ENCODE measurements at regions of chr1 and their contacts with region 1.

Region 1: DNA sequence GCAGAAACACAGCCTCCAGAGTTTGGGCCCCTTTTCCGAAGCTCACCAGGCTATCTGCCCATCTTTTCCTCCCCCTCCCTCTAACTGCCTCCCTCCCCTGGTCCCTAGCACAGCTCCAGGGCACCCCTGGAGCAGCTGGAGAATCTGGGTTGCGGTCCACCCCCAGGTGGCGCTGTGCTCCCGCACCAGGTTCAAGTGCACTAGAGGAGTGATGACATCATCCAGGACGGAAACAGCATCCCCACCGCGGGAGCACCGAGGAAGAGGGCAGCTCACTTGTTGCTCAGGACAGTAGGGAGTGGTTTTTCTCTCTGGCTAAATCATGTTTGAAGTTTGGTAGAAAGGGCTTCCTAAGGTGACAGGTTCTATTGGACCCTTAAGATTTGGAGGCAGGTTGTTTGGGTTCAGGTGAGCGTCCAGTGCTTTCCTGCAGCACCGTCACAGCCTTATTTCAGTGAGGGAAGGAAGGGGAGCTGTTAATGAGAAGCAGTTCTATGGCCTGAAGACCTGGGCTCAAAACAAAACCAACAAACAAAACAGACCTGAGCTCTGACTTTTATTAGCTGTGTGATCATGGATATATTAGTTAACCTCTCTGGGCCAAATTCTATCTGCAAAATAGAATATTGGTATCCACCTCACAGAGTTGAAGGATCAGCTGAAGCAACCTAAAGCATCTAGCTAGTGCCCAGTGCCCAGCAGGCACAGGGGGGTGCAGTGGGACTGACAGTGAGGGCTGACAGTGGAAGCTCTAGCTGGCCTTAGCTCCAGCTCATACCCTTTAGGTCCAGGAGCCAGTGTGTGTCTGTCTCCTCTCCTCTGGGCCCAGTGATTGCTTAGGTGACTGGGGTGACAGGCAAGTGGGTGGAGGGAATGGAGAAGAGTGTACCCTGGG is 7.5 kb downstream of the SHISA4 start:
- DNase-seq: peak; percentile 81
- H3K4me3 ChIP-seq: no peak overlapping the region
- H3K27ac ChIP-seq: peak overlapping the region; percentile 54 to 59
- H3K4me1 ChIP-seq: no peaks in the 10 kb centered on the region
- H3K27me3 ChIP-seq: no peaks in the 10 kb centered on the region
- CTCF ChIP-seq: peak; percentile 74 to 96 (median 92)
- POLR2A ChIP-seq: no peak

Region 2: GRCh38 chr1:201946224-201946908 is 50.2 kb after region 1 on chr1 and contains the start of gene LMOD1:
- intact Hi-C with region 1: loop called (anchors 2 kb)
- DNase-seq: peak; percentile 66
- H3K4me3 ChIP-seq: peak within 1 kb of the TSS; percentile 32 to 40
- H3K27ac ChIP-seq: peak within 1 kb of the TSS; percentile 74 to 81
- H3K4me1 ChIP-seq: no peaks in the 10 kb centered on the region
- H3K27me3 ChIP-seq: no peaks in the 10 kb centered on the region
- CTCF ChIP-seq: peak in 1 of 4 experiments; percentile 18
- POLR2A ChIP-seq: peak; percentile 49
- total RNA-seq, gene LMOD1: 112 to 190 TPM

Region 3: GRCh38 chr1:202085682-202086404 is 189.7 kb after region 1 on chr1:
- intact Hi-C with region 1: no loop called
- DNase-seq: peak; percentile 4
- H3K4me3 ChIP-seq: no peak overlapping the region
- H3K27ac ChIP-seq: peak overlapping the region; percentile 53 to 58
- H3K4me1 ChIP-seq: no peaks in the 10 kb centered on the region
- H3K27me3 ChIP-seq: no peaks in the 10 kb centered on the region
- CTCF ChIP-seq: no peak
- POLR2A ChIP-seq: no peak

Region 4: GRCh38 chr1:202135221-202135721 is 239.1 kb after region 1 on chr1:
- intact Hi-C with region 1: loop called (anchors 10 kb)
- DNase-seq: peak; percentile 58
- H3K4me3 ChIP-seq: no peak overlapping the region
- H3K27ac ChIP-seq: peak overlapping the region; percentile 78 to 83
- H3K4me1 ChIP-seq: peaks cover 15% of the 10 kb centered on the region
- H3K27me3 ChIP-seq: no peaks in the 10 kb centered on the region
- CTCF ChIP-seq: peak; percentile 80 to 89 (median 83)
- POLR2A ChIP-seq: no peak

Measured in prostate gland (tissue), 2 donors.